Activated CD8-positive, alpha-beta T cell treated with anti-CD3 and anti-CD28 coated beads, Interleukin-2, amount 10 ng/mL, durations not matched to agents 7 days and 5 days (primary cell): ENCODE measurements at regions of chr1 and their contacts with region 1.

Region 1: DNA sequence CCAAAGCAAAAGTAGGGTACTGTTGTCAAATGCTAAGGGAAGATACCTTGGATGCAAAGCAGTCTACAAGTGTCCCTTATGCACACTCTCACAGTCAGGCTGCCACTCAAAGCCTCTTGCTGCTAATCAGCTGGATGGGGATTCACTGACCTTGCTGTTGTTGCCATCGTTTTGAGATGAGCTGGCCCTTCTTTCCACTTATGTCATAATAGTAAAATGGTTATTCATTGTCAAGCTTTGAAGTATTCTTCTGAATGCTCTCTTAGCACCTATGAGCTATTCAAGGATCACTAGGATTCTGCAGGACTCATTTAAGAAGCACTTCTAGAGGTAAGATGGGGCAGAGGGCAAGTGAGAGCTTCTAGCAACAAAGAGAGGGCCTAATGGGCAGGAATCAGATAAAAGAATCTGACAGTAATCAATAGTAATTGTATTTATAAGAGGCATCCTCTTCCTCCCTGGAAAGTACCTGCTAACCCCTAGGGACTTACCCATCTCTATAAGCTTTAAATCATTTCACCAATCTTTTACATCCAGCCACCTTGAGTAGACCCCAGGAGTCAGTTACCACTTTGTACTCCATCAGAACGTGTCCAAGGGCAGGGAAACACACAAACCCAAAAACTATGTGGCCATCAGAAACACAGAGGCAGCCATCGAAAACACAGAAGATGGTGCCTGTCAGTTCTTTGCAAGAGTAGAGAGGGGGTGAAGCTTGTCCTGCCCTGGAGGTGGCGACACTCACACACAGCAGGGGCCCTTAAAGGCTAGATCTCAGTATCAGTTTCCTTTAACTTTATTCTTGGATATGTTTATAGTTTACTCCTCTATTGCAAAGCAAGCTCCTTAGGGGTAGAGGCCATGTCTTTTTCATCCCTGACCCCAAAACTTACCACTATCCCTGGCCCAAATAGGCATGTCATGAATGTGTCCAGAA is 103.7 kb upstream of the NFIA start:
- DNase-seq: peak; percentile 42
- ATAC-seq: no peak
- H3K4me3 Mint-ChIP-seq: no peak overlapping the region
- H3K27ac Mint-ChIP-seq: no peak overlapping the region
- H3K4me1 Mint-ChIP-seq: no peaks in the 10 kb centered on the region
- H3K27me3 Mint-ChIP-seq: peaks cover 5% of the 10 kb centered on the region

Region 2: DNA sequence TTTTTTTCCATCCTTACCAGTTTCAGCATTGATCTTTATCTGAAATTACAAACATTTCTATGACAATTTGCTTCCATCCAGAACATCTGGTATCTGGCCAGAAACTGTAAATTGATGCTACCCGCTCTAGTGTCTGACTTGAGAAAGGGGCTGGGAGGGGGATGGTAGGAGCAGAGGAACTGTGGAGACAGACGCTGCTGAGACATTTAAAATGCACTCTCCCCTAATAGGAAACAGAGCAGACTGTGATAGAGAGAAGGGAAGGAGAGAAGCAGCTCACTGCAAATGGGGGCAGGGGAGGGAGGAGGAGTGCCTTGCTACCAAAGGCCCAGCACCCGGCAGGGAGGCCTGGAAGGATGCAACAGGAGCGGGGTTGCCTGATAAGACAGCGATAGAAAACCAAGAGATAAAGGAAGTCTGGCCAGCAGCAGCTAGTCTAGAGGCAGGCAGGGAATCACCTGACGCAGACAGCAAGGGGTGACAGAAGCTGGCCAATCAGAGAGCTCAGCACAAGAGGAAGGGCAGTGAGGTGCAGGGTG is 91.8 kb before region 1 on chr1:
- CTCF ChIA-PET with region 1: no interaction called
- POLR2A ChIA-PET with region 1: no interaction called
- DNase-seq: no peak
- ATAC-seq: no peak
- H3K4me3 Mint-ChIP-seq: no peak overlapping the region
- H3K27ac Mint-ChIP-seq: no peak overlapping the region
- H3K4me1 Mint-ChIP-seq: no peaks in the 10 kb centered on the region
- H3K27me3 Mint-ChIP-seq: peaks cover 14% of the 10 kb centered on the region

Region 3: GRCh38 chr1:61453111-61453961 is 474.6 kb after region 1 on chr1:
- CTCF ChIA-PET with region 1: interaction called, 13 read pairs
- POLR2A ChIA-PET with region 1: no interaction called
- DNase-seq: peak; percentile 76
- ATAC-seq: peak; percentile 84
- H3K4me3 Mint-ChIP-seq: no peak overlapping the region
- H3K27ac Mint-ChIP-seq: peak overlapping the region; percentile 30
- H3K4me1 Mint-ChIP-seq: peaks cover 9% of the 10 kb centered on the region
- H3K27me3 Mint-ChIP-seq: peaks cover 3% of the 10 kb centered on the region